ENCODE measurements at regions of chr4 and their contacts with region 1.

Region 1: DNA sequence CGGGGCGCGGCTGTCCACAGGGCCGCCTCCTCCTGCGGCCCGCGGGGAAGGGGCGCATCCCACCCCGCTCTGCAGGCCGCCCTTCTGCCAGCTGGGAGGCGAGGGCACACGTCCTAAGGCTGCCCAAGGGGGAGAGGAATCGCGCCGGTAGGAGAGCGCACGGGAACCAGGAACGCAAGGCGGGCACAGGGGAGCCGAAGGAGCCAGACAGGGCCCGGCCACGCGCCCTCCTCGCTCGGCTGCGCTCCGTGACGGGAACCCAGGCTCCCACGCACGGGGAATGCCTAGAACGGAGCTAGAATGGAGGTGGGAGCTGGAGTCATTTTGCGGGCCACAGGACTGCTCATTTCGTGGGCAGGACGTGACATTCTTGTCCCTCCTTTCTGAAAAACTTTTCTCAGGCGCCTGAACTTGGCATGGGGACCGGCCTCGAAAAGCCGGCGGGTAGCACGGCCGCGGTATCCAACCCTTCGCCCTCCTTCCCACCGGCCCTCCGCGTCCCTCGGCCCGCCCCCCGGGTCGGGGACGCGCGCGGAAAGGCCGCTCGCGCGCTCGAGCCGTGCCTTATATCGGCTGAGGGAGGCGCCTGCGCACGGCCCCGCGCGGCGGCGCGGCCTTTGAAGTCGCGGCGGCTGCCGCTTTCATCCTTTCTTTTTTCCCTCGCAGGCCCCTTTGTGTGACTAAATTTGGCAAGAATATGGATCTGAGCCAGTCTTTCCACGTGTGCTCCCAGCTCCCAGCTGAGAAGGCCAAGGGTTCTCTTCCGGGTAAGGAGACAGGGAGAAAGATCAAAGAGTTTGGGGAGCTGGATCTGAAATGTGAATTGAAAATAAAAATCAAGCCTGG is 4.2 kb upstream of the LEF1 start:
- DNase-seq: peak; percentile 93
- H3K4me3 Mint-ChIP-seq: peak overlapping the region; percentile 97
- H3K27ac Mint-ChIP-seq: peak overlapping the region; percentile 93
- H3K4me1 Mint-ChIP-seq: peaks cover 53% of the 10 kb centered on the region
- H3K27me3 Mint-ChIP-seq: peaks cover 14% of the 10 kb centered on the region

Region 2: GRCh38 chr4:108118490-108118889 is 54.5 kb before region 1 on chr4:
- intact Hi-C with region 1: no loop called
- DNase-seq: peak; percentile 82
- H3K4me3 Mint-ChIP-seq: peak overlapping the region; percentile 66
- H3K27ac Mint-ChIP-seq: peak overlapping the region; percentile 91
- H3K4me1 Mint-ChIP-seq: peaks cover 82% of the 10 kb centered on the region
- H3K27me3 Mint-ChIP-seq: no peaks in the 10 kb centered on the region

Region 3: DNA sequence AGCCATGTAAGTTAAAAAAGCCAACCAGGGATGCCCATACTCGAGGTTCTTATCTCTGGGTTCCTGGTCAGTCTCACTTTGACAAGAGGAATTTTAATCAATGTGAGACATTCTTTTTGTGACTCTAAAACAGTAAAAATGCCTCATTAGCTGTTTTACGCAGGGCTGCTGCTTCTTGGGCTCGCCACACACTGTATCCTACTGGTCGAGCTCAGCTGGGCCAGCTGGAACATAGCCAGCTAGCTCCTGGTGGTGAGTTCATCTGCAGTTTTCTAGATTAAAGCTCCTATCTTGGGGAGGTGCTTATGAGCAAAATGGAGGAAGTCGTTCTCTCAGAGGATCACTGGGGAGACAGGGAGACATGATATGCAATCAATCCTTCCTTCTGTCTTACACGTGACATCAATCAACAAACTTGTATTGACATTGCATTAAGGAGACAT is 51.7 kb after region 1 on chr4:
- intact Hi-C with region 1: no loop called
- DNase-seq: no peak
- H3K4me3 Mint-ChIP-seq: no peak overlapping the region
- H3K27ac Mint-ChIP-seq: no peak overlapping the region
- H3K4me1 Mint-ChIP-seq: peaks cover 3% of the 10 kb centered on the region
- H3K27me3 Mint-ChIP-seq: no peaks in the 10 kb centered on the region

Region 4: DNA sequence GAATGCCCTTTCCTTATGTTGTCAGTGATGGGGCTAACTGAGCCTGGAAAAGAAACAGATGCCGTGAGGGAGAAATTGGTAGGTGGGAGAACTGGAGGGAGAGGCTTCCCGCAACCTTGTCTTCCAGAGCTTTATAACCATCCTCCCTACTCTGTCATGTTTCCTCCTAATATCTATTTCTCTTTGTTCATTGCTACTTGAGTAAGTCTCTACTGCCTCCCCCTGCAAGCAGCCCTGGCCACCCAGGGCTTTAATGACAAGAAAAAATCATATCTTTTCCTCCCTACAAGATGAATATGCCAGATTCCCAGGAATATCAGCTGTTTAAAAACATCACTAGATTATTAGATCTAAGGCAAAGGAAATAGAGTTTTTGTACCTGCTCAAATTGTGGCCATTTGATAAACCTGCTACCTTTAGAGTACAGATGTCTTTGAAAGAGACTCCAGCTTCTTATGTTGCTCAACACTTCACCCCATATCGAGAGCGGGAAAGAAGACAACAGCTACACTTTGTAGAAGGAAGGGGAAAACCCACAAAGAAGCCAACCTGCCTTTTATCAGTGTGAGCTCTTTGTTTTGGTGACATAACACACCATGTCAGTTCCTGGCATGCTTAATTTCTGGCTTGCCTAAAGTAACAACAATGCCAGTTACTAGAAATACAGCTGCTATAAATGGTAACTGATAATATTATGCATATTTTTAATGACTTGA is 182.4 kb after region 1 on chr4:
- intact Hi-C with region 1: loop called (anchors 5 kb)
- DNase-seq: peak; percentile 88
- H3K4me3 Mint-ChIP-seq: peak overlapping the region; percentile 71
- H3K27ac Mint-ChIP-seq: peak overlapping the region; percentile 26
- H3K4me1 Mint-ChIP-seq: peaks cover 49% of the 10 kb centered on the region
- H3K27me3 Mint-ChIP-seq: no peaks in the 10 kb centered on the region

Region 5: GRCh38 chr4:108512615-108513505 is 339.9 kb after region 1 on chr4:
- intact Hi-C with region 1: loop called (anchors 5 kb)
- DNase-seq: peak; percentile 80
- H3K4me3 Mint-ChIP-seq: peak overlapping the region; percentile 53
- H3K27ac Mint-ChIP-seq: no peak overlapping the region
- H3K4me1 Mint-ChIP-seq: peaks cover 16% of the 10 kb centered on the region
- H3K27me3 Mint-ChIP-seq: peaks cover 4% of the 10 kb centered on the region

Region 6: GRCh38 chr4:108570993-108571569 is 398.1 kb after region 1 on chr4:
- intact Hi-C with region 1: loop called (anchors 2 kb)
- DNase-seq: no peak
- H3K4me3 Mint-ChIP-seq: no peak overlapping the region
- H3K27ac Mint-ChIP-seq: peak overlapping the region; percentile 13
- H3K4me1 Mint-ChIP-seq: peaks cover 14% of the 10 kb centered on the region
- H3K27me3 Mint-ChIP-seq: peaks cover 1% of the 10 kb centered on the region

Region 7: DNA sequence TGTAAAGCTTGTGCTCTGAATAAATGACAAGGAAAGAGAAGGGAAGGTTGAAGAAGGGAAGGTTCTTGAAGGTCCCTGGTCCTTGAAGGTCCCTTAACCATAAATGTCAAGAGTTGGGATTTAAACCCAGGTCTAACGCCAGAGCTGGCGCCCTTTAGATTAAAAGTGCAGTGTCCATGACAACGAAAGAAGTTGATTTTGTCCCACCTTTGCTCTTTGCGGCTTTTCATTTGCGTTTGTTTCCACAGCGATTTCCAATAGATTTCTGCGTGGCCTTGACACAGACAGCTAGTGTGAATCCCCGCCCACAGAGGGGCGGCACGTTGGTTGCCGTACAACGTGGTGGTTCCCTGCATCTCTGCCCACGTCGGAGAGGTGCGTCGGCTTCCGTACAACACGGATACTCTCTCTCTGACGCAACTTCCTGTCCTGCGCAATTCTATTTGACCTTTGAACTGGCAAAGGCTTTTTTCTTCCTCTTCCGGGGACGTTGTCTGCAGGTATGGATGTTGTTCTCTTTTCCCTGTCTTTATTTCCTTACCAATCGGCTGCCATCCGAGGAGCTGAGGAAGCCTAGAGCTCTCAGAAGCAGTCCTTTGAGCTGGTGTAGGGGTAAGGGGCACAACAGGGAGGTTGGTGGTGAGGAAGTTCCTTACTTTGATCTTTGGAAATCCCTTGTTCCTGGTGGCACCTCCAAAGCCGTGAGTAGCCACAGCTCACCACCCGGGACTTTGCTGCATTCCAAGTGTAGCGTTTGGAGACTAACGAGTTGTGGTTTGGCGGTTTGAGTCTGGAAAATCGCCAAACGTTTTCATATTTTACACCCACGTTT is 447.3 kb after region 1 on chr4 and contains the start of gene RPL34:
- intact Hi-C with region 1: loop called (anchors 2 kb)
- DNase-seq: peak; percentile 99
- H3K4me3 Mint-ChIP-seq: peak within 1 kb of the TSS; percentile 93
- H3K27ac Mint-ChIP-seq: peak within 1 kb of the TSS; percentile 96
- H3K4me1 Mint-ChIP-seq: peaks cover 40% of the 10 kb centered on the region
- H3K27me3 Mint-ChIP-seq: no peaks in the 10 kb centered on the region
- total RNA-seq, gene RPL34: 1,411 and 1,425 TPM in 2 replicates